Dendritic cell treated with granulocyte-macrophage colony-stimulating factor and Interleukin-4, amounts not matched to agents 40 ng/mL and 50 ng/mL, for 4 days (primary cell): ENCODE measurements at regions of chr14 and their contacts with region 1.

Region 1: GRCh38 chr14:75293920-75294642 is 15.5 kb downstream of the FOS start:
- H3K4me3 Mint-ChIP-seq: peak overlapping the region; percentile 77
- H3K27ac Mint-ChIP-seq: peak overlapping the region; percentile 98
- H3K4me1 Mint-ChIP-seq: peaks cover 56% of the 10 kb centered on the region
- H3K27me3 Mint-ChIP-seq: no peaks in the 10 kb centered on the region

Region 2: GRCh38 chr14:75176142-75176820 is 117.8 kb before region 1 on chr14 and contains the start of gene TMED10:
- intact Hi-C with region 1: loop called (anchors 5 kb)
- H3K4me3 Mint-ChIP-seq: peak within 1 kb of the TSS; percentile 100
- H3K27ac Mint-ChIP-seq: peak within 1 kb of the TSS; percentile 100
- H3K4me1 Mint-ChIP-seq: peaks cover 59% of the 10 kb centered on the region
- H3K27me3 Mint-ChIP-seq: no peaks in the 10 kb centered on the region

Region 3: GRCh38 chr14:75230140-75231045 is 63.7 kb before region 1 on chr14:
- intact Hi-C with region 1: loop called (anchors 10 kb)
- H3K4me3 Mint-ChIP-seq: peak overlapping the region; percentile 50
- H3K27ac Mint-ChIP-seq: peak overlapping the region; percentile 4
- H3K4me1 Mint-ChIP-seq: peaks cover 71% of the 10 kb centered on the region
- H3K27me3 Mint-ChIP-seq: peaks cover 1% of the 10 kb centered on the region

Region 4: DNA sequence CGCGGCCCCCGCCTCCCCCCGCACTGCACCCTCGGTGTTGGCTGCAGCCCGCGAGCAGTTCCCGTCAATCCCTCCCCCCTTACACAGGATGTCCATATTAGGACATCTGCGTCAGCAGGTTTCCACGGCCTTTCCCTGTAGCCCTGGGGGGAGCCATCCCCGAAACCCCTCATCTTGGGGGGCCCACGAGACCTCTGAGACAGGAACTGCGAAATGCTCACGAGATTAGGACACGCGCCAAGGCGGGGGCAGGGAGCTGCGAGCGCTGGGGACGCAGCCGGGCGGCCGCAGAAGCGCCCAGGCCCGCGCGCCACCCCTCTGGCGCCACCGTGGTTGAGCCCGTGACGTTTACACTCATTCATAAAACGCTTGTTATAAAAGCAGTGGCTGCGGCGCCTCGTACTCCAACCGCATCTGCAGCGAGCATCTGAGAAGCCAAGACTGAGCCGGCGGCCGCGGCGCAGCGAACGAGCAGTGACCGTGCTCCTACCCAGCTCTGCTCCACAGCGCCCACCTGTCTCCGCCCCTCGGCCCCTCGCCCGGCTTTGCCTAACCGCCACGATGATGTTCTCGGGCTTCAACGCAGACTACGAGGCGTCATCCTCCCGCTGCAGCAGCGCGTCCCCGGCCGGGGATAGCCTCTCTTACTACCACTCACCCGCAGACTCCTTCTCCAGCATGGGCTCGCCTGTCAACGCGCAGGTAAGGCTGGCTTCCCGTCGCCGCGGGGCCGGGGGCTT is 15.5 kb before region 1 on chr14 and contains the start of gene FOS:
- intact Hi-C with region 1: loop called (anchors 2 kb)
- H3K4me3 Mint-ChIP-seq: peak within 1 kb of the TSS; percentile 90
- H3K27ac Mint-ChIP-seq: peak within 1 kb of the TSS; percentile 98
- H3K4me1 Mint-ChIP-seq: peaks cover 72% of the 10 kb centered on the region
- H3K27me3 Mint-ChIP-seq: peaks cover under 1% of the 10 kb centered on the region